CD14-positive monocyte (primary cell): ENCODE measurements at regions of chr7 and their contacts with region 1.

Region 1: DNA sequence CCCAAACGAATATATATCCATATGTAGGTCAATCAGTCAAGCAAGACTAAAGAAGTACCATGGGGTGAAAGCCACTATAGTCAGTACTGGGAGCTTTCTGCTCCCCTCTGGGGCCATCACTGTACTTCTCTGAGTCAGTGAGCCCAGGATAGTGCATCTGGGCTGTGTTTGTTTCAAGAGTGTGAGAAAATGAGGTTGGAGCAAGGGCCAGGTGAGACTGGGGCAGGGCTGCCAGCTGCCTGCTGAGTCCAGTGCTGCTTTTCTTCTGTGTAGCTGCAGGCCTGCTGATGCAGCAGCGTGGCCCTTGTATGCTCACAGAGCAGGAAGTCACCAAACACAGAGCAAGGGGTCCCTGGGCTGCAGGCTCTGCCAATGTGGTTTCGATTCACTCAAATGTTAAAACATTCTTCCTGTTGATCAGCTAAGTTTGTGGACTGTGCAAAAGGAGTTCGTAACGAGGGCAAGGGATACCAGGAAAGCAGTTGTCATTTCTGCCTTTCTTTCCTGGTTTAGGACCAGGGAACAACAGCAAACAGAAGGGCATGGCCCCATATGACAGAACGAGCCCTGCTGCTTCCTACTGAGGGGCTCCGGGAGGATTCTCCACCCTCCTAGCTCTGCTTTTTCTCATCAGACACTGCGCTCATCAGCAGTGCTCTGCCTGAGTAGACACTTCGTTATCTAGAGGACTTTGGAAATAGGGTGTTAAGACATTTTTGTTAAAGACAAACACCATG is 65.4 kb upstream of the TNS3 start:
- DNase-seq: no peak
- H3K4me3 ChIP-seq: no peak overlapping the region
- H3K4me3 Mint-ChIP-seq: peak overlapping the region; percentile 51 to 73
- H3K27ac ChIP-seq: no peak overlapping the region
- H3K27ac Mint-ChIP-seq: peak overlapping the region in 2 of 7 donors; percentile 39 to 64
- H3K4me1 ChIP-seq: peaks cover 23 to 29% of the 10 kb centered on the region in 2 donors
- H3K4me1 Mint-ChIP-seq: peaks cover 34% of the 10 kb centered on the region
- H3K27me3 ChIP-seq: no peaks in the 10 kb centered on the region
- H3K27me3 Mint-ChIP-seq: peaks cover 3 to 6% (median 4%) of the 10 kb centered on the region in 3 donors
- CTCF ChIP-seq: no peak

Region 2: DNA sequence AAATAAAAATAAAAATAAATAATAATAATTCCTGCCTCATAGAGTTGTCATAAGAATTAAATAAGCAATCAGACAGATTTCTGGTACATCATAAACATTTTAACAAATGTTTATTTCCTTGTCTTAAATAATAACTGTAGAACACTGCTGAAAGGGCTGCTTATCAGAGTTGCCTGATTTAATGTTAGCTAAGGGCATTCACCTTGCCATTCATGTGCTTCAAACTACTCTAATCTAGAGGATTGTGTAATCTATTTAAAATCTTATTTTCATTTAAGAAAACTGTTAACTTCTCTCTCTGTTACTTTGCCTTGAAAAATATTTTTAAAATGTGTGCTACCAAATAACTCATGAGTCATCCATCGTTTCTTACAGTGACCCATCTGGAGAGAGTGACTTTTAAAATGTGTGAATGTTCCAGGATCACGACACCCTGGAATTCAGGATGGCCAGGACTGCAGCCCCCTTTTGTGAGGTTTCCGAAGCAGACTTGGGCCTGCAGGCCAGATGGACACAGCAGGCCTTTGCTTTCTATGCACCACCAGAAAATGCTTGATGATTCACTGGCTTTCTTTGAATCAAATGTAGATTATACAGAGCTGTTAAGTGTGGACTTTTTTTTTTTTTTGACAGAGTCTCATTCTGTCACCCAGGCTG is 43.7 kb after region 1 on chr7:
- intact Hi-C with region 1: loop called in 1 of 2 experiments (anchors 10 kb)
- DNase-seq: no peak
- H3K4me3 ChIP-seq: no peak overlapping the region
- H3K4me3 Mint-ChIP-seq: no peak overlapping the region
- H3K27ac ChIP-seq: no peak overlapping the region
- H3K27ac Mint-ChIP-seq: peak overlapping the region in 1 of 7 donors; percentile 41
- H3K4me1 ChIP-seq: no peaks in the 10 kb centered on the region
- H3K4me1 Mint-ChIP-seq: no peaks in the 10 kb centered on the region
- H3K27me3 ChIP-seq: no peaks in the 10 kb centered on the region
- H3K27me3 Mint-ChIP-seq: peaks cover 0 to 4% (median 3%) of the 10 kb centered on the region in 3 donors
- CTCF ChIP-seq: no peak

Region 3: DNA sequence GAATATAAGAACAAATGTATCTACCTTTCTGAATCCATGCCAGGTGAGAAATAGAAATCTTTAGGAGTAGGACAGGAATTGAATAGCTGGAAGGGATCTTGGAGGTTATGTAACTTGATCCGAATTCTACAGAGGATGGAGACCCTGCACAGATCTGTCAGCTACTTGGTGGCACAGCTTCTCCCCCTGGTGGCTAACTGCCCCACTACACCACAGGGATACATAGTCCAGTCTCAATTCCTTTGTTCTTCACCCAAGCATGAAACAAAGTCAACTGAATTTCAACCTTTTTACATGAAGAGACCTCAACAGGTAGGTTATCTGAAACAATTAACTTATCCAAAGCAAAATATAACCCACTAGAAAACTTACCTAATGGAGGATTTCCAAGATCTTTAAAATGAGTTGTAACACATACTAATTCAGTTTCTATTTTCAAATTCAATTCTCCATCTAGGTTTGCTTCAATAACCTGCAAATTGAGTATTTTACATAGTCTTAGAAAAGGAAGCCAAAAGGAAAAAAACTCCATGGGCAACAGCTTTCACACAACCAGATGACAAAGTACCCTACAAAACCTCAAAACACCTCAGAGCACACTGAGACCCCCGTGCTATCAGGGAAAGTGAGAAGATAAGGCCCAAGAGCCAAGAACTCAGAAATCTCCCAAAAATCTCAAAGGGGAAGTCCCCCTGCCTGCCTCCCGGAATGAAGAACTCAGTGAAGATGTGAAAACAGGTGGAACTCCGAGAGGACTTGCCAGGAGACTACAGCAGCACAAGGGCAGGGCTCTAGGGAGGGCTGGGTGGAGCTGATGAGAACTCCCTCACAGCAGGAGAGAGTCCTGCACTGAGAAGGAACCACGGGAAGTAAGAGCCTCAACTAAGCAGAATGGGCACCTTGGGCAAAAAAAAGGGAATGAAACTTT is 321.8 kb after region 1 on chr7:
- intact Hi-C with region 1: no loop called
- DNase-seq: peak; percentile 45 to 65 (median 63)
- H3K4me3 ChIP-seq: peak overlapping the region in 1 of 3 experiments; percentile 27
- H3K4me3 Mint-ChIP-seq: peak overlapping the region; percentile 37 to 84
- H3K27ac ChIP-seq: peak overlapping the region; percentile 69 to 84
- H3K27ac Mint-ChIP-seq: peak overlapping the region; percentile 95 to 99 (median 99)
- H3K4me1 ChIP-seq: peaks cover 22 to 28% of the 10 kb centered on the region in 2 donors
- H3K4me1 Mint-ChIP-seq: peaks cover 27% of the 10 kb centered on the region
- H3K27me3 ChIP-seq: no peaks in the 10 kb centered on the region
- H3K27me3 Mint-ChIP-seq: peaks cover 0 to 4% (median 1%) of the 10 kb centered on the region in 3 donors
- CTCF ChIP-seq: peak; percentile 96